ENCODE measurements at regions of chr15 and their contacts with region 1.

Region 1: DNA sequence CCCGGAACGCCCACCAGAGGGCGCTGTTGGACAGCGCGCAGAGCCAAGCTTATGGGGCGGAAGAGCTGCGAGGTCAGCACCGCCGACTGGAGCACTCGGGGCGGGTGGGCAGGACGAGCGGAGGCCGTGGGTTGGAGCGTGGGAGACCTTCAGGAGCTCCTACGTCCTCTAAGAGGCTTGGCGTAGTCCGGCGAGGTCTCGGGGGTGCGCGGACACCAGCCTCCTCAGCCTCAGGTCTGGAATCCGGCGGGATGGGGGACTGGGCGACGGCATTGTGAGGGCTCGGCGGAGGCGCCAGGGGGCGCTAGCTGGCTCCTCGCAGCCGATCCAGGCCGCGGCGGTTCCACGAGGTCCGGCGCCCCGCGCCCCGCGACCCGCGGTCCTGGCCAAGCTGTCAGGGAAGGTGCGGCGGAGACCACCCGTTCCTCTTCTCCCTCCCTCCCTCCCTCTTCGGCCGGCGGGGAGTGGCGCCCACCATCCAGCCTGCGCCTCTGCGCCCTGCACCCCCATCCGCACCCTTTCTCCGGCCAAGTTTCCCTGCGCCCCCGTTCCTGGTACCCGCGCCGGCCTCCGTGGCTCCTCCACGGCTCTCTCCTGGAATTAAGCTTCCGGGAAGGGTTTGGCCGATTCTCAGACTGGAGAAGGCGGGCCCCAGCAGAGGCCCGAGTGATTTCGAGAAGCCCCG is 24.3 kb upstream of the POLG start:
- DNase-seq: peak; percentile 23
- H3K4me3 ChIP-seq: peak overlapping the region; percentile 33
- CTCF ChIP-seq: peak; percentile 78

Region 2: DNA sequence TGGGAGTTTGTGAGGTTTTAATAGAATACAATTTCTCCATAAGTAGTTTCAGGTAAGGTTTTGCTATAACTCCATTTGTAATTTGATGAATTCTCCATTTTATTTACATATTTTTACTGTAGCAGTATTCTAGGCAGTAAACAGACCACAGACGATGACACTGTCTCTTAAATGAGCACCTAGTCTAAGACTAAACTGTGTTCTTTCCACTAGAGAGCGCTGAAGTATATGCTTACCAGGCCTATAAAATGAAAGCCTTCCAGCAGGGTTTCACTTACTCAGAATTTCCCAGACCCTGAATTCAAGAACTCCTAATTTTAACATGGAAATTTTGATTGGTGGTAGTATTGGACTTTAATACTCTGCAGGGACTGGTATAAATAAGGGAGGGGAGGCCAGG is 65.9 kb before region 1 on chr15:
- in situ Hi-C with region 1: no loop called
- DNase-seq: no peak
- H3K4me3 ChIP-seq: no peak overlapping the region
- CTCF ChIP-seq: no peak

Region 3: GRCh38 chr15:89389841-89390603 is 31.1 kb after region 1 on chr15:
- in situ Hi-C with region 1: loop called (anchors 5 kb)
- DNase-seq: no peak
- H3K4me3 ChIP-seq: no peak overlapping the region
- CTCF ChIP-seq: no peak

Region 4: DNA sequence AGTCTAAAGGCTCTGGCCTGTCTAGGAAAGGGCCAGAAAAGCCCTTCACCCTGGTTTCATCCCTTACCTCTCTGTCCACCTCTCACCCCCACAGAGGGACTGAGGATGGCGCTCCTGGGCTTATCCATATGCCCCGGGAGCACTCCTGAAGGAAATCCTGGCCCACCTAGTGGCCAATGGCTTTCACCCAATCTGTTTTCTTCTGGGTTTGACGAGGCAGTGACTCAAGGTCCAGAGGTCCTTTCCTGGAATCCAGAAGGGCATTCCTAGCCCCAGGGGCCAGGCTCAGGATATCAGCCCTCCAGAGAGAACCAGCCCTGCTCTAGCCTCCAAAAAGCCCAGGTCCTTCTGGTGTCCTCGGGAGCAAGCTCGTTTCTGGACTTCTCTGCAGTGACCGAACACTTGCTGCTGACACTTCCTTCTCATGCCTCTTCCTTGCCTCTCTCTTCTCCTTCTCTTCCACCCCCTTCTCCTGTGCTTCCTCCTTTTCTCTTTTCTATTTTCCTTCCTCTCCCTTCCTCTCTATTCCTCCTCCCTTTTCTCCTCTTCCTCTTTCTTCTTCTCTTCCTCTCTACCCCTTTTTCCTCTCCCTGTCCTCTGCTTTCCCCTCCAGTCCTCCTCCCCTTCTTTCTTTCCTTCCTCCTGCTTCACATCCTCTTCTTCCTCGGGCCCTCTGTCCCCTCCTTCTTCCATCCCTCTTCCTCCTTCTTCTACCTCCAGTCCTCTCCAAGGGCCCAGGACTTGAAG is 77.8 kb after region 1 on chr15:
- in situ Hi-C with region 1: loop called (anchors 5 kb)
- DNase-seq: no peak
- H3K4me3 ChIP-seq: no peak overlapping the region
- CTCF ChIP-seq: no peak

Region 5: GRCh38 chr15:89457097-89457496 is 98.2 kb after region 1 on chr15:
- in situ Hi-C with region 1: no loop called
- DNase-seq: no peak
- H3K4me3 ChIP-seq: no peak overlapping the region
- CTCF ChIP-seq: no peak

Measured in astrocyte of the cerebellum (primary cell).